Dendritic cell treated with granulocyte-macrophage colony-stimulating factor and Interleukin-4, amounts not matched to agents 40 ng/mL and 50 ng/mL, for 4 days (primary cell): ENCODE measurements at regions of chr4 and their contacts with region 1.

Region 1: DNA sequence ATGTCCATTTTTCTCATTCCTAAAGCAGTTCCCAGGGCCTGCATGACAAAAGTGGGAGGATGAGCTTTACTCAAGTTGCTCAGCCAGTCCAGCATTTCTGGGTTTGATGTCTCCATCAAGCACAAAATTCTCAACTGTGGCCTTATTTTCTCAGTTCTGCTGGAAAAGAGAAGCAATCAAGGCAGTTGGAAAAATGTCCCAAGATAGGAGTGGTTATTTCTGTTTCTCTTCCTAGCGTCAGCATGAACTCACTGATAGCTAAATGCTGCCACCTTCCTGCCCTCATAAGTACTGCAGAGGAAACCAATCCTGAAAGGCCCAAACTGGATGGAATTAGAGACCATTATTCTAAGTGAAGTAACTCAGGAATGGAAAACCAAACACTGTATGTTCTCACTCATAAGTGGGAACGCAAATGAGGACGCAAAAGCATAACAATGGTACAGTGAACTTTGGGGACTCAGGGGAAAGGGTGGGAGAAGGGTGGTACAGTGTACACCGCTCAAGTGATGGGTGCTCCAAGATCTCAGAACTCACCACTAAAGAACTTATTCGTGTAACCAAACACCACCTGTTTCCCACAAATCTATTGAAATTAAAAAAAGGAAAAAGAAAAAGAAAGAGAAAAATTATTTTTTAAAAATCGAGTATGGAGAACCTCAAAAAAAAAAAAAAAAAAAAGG is 29.6 kb downstream of the ADH7 start:
- H3K4me3 Mint-ChIP-seq: no peak overlapping the region
- H3K27ac Mint-ChIP-seq: no peak overlapping the region
- H3K4me1 Mint-ChIP-seq: peaks cover 14% of the 10 kb centered on the region
- H3K27me3 Mint-ChIP-seq: no peaks in the 10 kb centered on the region

Region 2: DNA sequence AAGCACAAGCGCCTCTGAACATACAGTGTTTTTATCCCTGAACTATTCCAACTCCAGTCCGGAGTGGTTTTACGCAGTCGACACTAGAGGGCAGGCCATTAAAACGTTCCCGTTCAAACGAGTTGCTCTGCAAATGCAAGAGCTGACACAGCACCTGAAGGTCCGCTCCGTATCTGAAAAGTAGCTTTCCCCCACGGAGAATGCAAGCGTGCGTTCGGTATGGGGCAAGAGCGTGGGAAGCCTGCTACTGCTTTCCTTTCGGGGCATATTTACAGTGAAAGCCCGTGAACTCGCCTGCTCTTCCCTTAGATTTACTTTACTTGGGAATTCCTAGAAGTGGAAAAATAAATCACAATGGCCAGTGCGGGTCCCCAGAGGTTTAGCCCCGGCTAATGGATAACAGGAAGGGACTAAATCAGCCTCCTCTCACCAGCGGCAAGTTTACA is 937.9 kb before region 1 on chr4:
- intact Hi-C with region 1: loop called (anchors 1 kb)
- H3K4me3 Mint-ChIP-seq: peak overlapping the region; percentile 64
- H3K27ac Mint-ChIP-seq: no peak overlapping the region
- H3K4me1 Mint-ChIP-seq: peaks cover 6% of the 10 kb centered on the region
- H3K27me3 Mint-ChIP-seq: peaks cover 8% of the 10 kb centered on the region